ENCODE measurements at regions of chr1 and their contacts with region 1.

Region 1: DNA sequence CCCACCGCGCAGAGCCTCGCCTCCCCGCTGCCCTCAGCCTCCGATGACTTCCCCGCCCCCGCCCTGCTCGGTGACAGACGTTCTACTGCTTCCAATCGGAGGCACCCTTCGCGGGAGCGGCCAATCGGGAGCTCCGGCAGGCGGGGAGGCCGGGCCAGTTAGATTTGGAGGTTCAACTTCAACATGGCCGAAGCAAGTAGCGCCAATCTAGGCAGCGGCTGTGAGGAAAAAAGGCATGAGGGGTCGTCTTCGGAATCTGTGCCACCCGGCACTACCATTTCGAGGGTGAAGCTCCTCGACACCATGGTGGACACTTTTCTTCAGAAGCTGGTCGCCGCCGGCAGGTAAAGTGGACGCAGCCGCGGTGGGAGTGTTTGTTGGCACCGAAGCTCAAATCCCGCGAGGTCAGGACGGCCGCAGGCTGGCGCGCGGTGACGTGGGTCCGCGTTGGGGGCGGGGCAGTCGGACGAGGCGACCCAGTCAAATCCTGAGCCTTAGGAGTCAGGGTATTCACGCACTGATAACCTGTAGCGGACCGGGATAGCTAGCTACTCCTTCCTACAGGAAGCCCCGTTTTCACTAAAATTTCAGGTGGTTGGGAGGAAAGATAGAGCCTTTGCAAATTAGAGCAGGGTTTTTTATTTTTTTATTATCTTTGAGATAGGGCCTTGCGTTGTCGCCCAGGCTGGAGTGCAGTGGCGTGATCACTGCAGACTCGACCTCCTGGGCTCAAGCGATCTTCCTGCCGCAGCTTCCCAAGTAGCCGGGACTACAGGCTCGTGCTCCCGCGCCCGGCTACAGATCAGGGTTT is at the start of gene PMF1:
- DNase-seq: peak; percentile 98 to 99
- ATAC-seq: peak; percentile 98
- H3K4me3 ChIP-seq: peak within 1 kb of the TSS; percentile 53 to 56
- H3K27ac ChIP-seq: peak within 1 kb of the TSS; percentile 69 to 94
- H3K4me1 ChIP-seq: no peaks in the 10 kb centered on the region
- H3K27me3 ChIP-seq: no peaks in the 10 kb centered on the region
- total RNA-seq, gene PMF1: 31.4 to 38.5 TPM

Region 2: GRCh38 chr1:156160743-156161171 is 52.3 kb before region 1 on chr1:
- intact Hi-C with region 1: loop called in 1 of 2 experiments (anchors 5 kb)
- DNase-seq: peak; percentile 91 to 94
- ATAC-seq: peak; percentile 85
- H3K4me3 ChIP-seq: no peak overlapping the region
- H3K27ac ChIP-seq: peak overlapping the region in 1 of 2 donors; percentile 13
- H3K4me1 ChIP-seq: no peaks in the 10 kb centered on the region
- H3K27me3 ChIP-seq: no peaks in the 10 kb centered on the region

Region 3: GRCh38 chr1:156193488-156194299 is 19.3 kb before region 1 on chr1 and contains the start of gene SLC25A44:
- intact Hi-C with region 1: loop called in 1 of 2 experiments (anchors 2 kb)
- DNase-seq: peak; percentile 97
- ATAC-seq: peak; percentile 100
- H3K4me3 ChIP-seq: peak within 1 kb of the TSS; percentile 70 to 84
- H3K27ac ChIP-seq: peak within 1 kb of the TSS; percentile 1 to 65
- H3K4me1 ChIP-seq: no peaks in the 10 kb centered on the region
- H3K27me3 ChIP-seq: no peaks in the 10 kb centered on the region
- total RNA-seq, gene SLC25A44: 15.7 to 18.6 TPM

Measured in aorta (tissue), 5 donors.